ENCODE measurements at regions of chr7 and their contacts with region 1.

Region 1: DNA sequence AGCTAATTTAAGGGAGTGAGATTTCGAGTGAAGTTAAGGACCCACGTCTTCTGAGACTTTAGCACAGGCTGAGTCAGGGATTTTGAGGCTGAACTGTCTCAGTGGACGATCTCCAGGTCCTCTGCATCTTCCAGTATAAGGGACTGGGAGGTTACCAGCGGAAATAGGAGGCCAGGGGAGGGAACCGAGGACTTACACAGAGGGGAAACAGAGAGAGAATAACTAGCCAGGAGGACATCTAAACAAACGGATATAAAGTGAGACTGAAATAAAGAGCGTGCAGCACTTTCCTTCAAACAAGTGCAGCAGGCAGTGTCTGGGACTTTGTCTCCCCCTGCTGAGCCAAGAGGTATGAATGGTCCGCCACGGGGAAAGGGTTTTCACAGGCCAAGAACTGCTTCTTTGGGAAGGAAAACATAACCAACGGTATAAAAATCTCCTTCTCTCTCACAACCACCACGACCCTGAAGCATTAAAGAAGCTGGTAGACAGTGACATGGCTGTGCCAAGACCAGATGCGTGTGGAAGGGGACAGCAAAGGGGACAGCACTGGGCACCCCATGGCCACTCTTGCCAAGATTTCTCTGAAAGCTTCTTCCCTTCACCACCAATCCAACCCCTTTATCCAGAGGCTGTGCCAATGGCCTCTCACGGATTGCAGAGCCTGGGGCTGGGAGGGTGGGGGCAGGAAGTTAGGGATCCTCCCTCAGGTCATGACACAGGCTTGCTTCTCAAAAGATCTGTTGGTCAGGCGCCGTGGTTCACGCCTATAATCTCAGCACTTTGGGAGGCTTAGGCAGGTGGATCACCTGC is 72.0 kb downstream of the SLC37A3 start:
- DNase-seq: peak; percentile 67 to 87 (median 78)
- ATAC-seq: peak; percentile 88
- H3K4me3 ChIP-seq: no peak overlapping the region
- H3K27ac ChIP-seq: no peak overlapping the region
- H3K4me1 ChIP-seq: peaks cover 28 to 29% of the 10 kb centered on the region in 2 experiments
- H3K27me3 ChIP-seq: no peaks in the 10 kb centered on the region
- CTCF ChIP-seq: peak; percentile 92 to 98 (median 97)
- EP300 ChIP-seq: no peak
- POLR2A ChIP-seq: no peak
- RAD21 ChIP-seq: peak; percentile 97 to 99

Region 2: GRCh38 chr7:139645572-139646523 is 680.5 kb before region 1 on chr7:
- CTCF ChIA-PET with region 1: interaction called, 3 read pairs
- POLR2A ChIA-PET with region 1: no interaction called
- in situ Hi-C with region 1: loop called (anchors 10 kb)
- intact Hi-C with region 1: loop called (anchors 2 kb)
- DNase-seq: peak; percentile 84 to 93 (median 88)
- ATAC-seq: peak; percentile 94
- H3K4me3 ChIP-seq: no peak overlapping the region
- H3K27ac ChIP-seq: no peak overlapping the region
- H3K4me1 ChIP-seq: peaks cover 0 to 3% of the 10 kb centered on the region in 2 experiments; a peak in 2 of 5 replicates
- H3K27me3 ChIP-seq: peaks cover 0 to 3% of the 10 kb centered on the region in 2 experiments; a peak in 1 of 5 replicates
- CTCF ChIP-seq: peak; percentile 93 to 98 (median 98)
- EP300 ChIP-seq: no peak
- POLR2A ChIP-seq: no peak
- RAD21 ChIP-seq: peak; percentile 97 to 98

Region 3: DNA sequence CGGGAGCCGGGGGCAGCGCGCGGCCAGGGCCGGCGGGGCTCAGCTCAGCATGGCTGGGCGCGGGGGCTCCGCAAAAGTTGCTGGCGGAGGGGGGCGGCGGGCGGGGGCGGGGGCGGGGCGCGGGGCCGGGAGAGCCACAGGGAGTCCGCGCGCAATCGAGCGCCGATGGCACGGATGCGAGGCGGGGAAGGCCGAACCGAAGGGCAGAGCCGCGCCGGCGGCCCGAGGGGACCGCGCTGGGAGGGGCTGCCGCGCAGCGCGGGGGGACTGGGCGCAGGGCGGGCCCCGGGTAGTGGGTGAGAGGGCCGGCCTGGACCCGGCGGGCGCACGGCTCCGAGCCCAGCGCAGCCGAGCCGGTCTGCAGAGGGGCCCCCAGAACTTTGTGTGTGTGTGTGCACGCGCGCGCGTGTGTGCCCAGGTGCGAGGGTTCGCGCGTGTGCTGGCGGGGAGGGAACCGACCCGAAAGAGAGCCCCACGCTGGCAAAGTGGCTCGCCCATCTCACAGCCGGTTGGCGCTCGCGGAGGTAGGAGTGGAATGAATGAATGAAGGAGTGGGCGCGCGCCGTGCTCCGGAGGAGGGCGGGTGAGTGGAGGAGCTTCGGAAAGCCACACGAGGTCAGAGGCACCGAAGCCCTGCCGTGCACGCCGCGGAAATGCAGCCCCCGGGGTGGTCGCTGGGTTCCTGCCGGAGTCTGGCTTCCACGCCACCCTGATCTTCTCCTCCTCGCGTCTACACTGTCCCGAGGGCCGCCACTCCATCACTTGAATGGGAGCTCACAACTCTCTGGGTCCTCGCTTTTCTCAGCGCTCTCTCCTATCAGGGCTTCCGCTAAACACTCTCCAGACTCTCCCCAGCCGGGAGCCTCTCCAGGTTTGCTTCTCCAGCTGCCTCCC is 548.1 kb before region 1 on chr7 and contains the start of gene HIPK2:
- CTCF ChIA-PET with region 1: interaction called, 3 read pairs
- POLR2A ChIA-PET with region 1: no interaction called
- in situ Hi-C with region 1: no loop called
- intact Hi-C with region 1: loop called (anchors 10 kb)
- DNase-seq: peak; percentile 90 to 99 (median 96)
- ATAC-seq: peak; percentile 87
- H3K4me3 ChIP-seq: peak within 1 kb of the TSS; percentile 70
- H3K27ac ChIP-seq: peak within 1 kb of the TSS; percentile 62
- H3K4me1 ChIP-seq: peaks cover 14 to 15% of the 10 kb centered on the region in 2 experiments; a peak in 4 of 5 replicates
- H3K27me3 ChIP-seq: peaks cover 6 to 30% of the 10 kb centered on the region in 2 experiments; a peak in 4 of 5 replicates
- CTCF ChIP-seq: no peak
- EP300 ChIP-seq: no peak
- POLR2A ChIP-seq: peak; percentile 46; the same call in 1 of the 2 replicates
- RAD21 ChIP-seq: no peak
- polyA plus RNA-seq, gene HIPK2: 0.69 to 1.6 TPM

Region 4: GRCh38 chr7:140062528-140063299 is 263.6 kb before region 1 on chr7 and contains the start of gene PARP12:
- CTCF ChIA-PET with region 1: no interaction called
- POLR2A ChIA-PET with region 1: no interaction called
- in situ Hi-C with region 1: no loop called
- intact Hi-C with region 1: loop called (anchors 5 kb)
- DNase-seq: peak; percentile 93 to 97 (median 96)
- ATAC-seq: peak; percentile 90
- H3K4me3 ChIP-seq: peak within 1 kb of the TSS; percentile 60
- H3K27ac ChIP-seq: peak within 1 kb of the TSS; percentile 79
- H3K4me1 ChIP-seq: peaks cover 28 to 45% of the 10 kb centered on the region in 2 experiments
- H3K27me3 ChIP-seq: no peaks in the 10 kb centered on the region
- CTCF ChIP-seq: peak in 1 of 3 experiments; percentile 7; a peak in 1 of 6 replicates
- EP300 ChIP-seq: no peak
- POLR2A ChIP-seq: peak; percentile 81
- RAD21 ChIP-seq: no peak
- polyA plus RNA-seq, gene PARP12: 4.6 to 7.1 TPM

Region 5: GRCh38 chr7:140439359-140439758 is 113.0 kb after region 1 on chr7:
- CTCF ChIA-PET with region 1: no interaction called
- POLR2A ChIA-PET with region 1: no interaction called
- in situ Hi-C with region 1: no loop called
- intact Hi-C with region 1: loop called (anchors 5 kb)
- DNase-seq: no peak
- ATAC-seq: no peak
- H3K4me3 ChIP-seq: no peak overlapping the region
- H3K27ac ChIP-seq: no peak overlapping the region
- H3K4me1 ChIP-seq: peaks cover 2 to 12% of the 10 kb centered on the region in 2 experiments; a peak in 4 of 5 replicates
- H3K27me3 ChIP-seq: peaks cover 5 to 9% of the 10 kb centered on the region in 2 experiments
- CTCF ChIP-seq: no peak
- EP300 ChIP-seq: no peak
- POLR2A ChIP-seq: no peak
- RAD21 ChIP-seq: no peak

Region 6: GRCh38 chr7:140494867-140495266 is 168.5 kb after region 1 on chr7:
- CTCF ChIA-PET with region 1: no interaction called
- POLR2A ChIA-PET with region 1: no interaction called
- in situ Hi-C with region 1: no loop called
- intact Hi-C with region 1: loop called (anchors 5 kb)
- DNase-seq: no peak
- ATAC-seq: no peak
- H3K4me3 ChIP-seq: no peak overlapping the region
- H3K27ac ChIP-seq: no peak overlapping the region
- H3K4me1 ChIP-seq: peaks cover 4 to 8% of the 10 kb centered on the region in 2 experiments; a peak in 4 of 5 replicates
- H3K27me3 ChIP-seq: no peaks in the 10 kb centered on the region
- CTCF ChIP-seq: no peak
- EP300 ChIP-seq: no peak
- POLR2A ChIP-seq: no peak
- RAD21 ChIP-seq: no peak

Region 7: GRCh38 chr7:140653319-140654108 is 327.2 kb after region 1 on chr7:
- CTCF ChIA-PET with region 1: interaction called, 4 read pairs
- POLR2A ChIA-PET with region 1: no interaction called
- in situ Hi-C with region 1: no loop called
- intact Hi-C with region 1: loop called (anchors 5 kb)
- DNase-seq: peak; percentile 77 to 84 (median 81)
- ATAC-seq: peak; percentile 83
- H3K4me3 ChIP-seq: no peak overlapping the region
- H3K27ac ChIP-seq: no peak overlapping the region
- H3K4me1 ChIP-seq: no peaks in the 10 kb centered on the region; a peak in 2 of 5 replicates
- H3K27me3 ChIP-seq: peaks cover 50 to 84% of the 10 kb centered on the region in 2 experiments; a peak in 4 of 5 replicates
- CTCF ChIP-seq: peak; percentile 87 to 98 (median 96)
- EP300 ChIP-seq: 0 out of 2 replicates have a peak, but pooled peaks have one; percentile 9
- POLR2A ChIP-seq: no peak
- RAD21 ChIP-seq: peak; percentile 95 to 96